ENCODE measurements at regions of chr5 and their contacts with region 1.

Region 1: DNA sequence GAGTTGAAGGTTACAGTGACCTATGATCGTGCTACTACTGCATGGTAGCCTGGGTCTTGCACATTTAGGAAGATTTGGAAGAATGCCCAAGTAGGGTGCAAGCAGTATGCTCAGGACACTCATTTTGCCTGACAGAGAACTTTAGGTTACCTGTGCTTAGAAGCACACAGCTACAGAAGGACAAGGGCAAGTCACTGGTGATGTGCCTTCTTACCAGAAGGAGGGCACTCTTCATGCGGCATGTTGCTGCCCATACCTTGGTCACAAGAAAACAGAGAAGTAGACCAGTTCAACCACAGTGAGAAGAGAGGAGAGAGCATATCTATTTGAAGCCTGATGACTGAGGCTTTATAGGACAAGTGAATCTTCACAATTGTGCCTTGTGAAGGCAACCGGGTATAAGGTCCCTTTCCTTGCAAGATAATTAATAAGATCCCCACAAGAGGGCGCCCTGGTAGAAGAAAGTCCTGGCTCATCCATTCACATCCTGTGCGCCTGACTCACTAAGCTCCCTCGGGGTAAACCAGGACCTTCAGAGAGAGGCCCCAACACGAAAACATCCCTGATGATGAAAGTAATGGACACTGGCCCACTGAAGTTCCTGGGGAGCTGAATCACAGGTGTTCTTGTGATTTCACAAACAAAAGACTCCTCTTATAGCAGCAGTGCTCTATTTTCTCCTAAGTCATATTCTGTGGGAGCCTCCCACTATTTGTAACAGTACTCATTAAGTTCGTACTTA is 38.1 kb upstream of the STARD4 start:
- DNase-seq: peak; percentile 93
- H3K4me3 Mint-ChIP-seq: peak overlapping the region; percentile 20
- H3K27ac Mint-ChIP-seq: peak overlapping the region; percentile 72
- H3K4me1 Mint-ChIP-seq: peaks cover 36% of the 10 kb centered on the region
- H3K27me3 Mint-ChIP-seq: peaks cover 4% of the 10 kb centered on the region

Region 2: GRCh38 chr5:111853748-111854147 is 303.3 kb after region 1 on chr5:
- intact Hi-C with region 1: loop called (anchors 10 kb)
- DNase-seq: no peak
- H3K4me3 Mint-ChIP-seq: no peak overlapping the region
- H3K27ac Mint-ChIP-seq: no peak overlapping the region
- H3K4me1 Mint-ChIP-seq: no peaks in the 10 kb centered on the region
- H3K27me3 Mint-ChIP-seq: peaks cover 5% of the 10 kb centered on the region